ENCODE measurements at regions of chr20 and their contacts with region 1.

Region 1: GRCh38 chr20:45752746-45753145 is 30.6 kb downstream of the SPINT4 start:
- DNase-seq: peak; percentile 53
- H3K4me3 Mint-ChIP-seq: no peak overlapping the region
- H3K27ac Mint-ChIP-seq: no peak overlapping the region
- H3K4me1 Mint-ChIP-seq: peaks cover 26% of the 10 kb centered on the region
- H3K27me3 Mint-ChIP-seq: peaks cover 16% of the 10 kb centered on the region

Region 2: GRCh38 chr20:45347936-45348778 is 404.6 kb before region 1 on chr20 and contains the start of gene SDC4:
- CTCF ChIA-PET with region 1: no interaction called
- intact Hi-C with region 1: loop called (anchors 1 kb)
- DNase-seq: peak; percentile 68
- H3K4me3 Mint-ChIP-seq: peak within 1 kb of the TSS; percentile 80
- H3K27ac Mint-ChIP-seq: peak within 1 kb of the TSS; percentile 77
- H3K4me1 Mint-ChIP-seq: peaks cover 38% of the 10 kb centered on the region
- H3K27me3 Mint-ChIP-seq: no peaks in the 10 kb centered on the region
- total RNA-seq, gene SDC4: 28.4 to 31.4 TPM

Region 3: GRCh38 chr20:45611054-45611453 is 141.7 kb before region 1 on chr20:
- CTCF ChIA-PET with region 1: no interaction called
- intact Hi-C with region 1: loop called (anchors 1 kb)
- DNase-seq: peak; percentile 62
- H3K4me3 Mint-ChIP-seq: no peak overlapping the region
- H3K27ac Mint-ChIP-seq: no peak overlapping the region
- H3K4me1 Mint-ChIP-seq: peaks cover 15% of the 10 kb centered on the region
- H3K27me3 Mint-ChIP-seq: peaks cover 10% of the 10 kb centered on the region

Region 4: DNA sequence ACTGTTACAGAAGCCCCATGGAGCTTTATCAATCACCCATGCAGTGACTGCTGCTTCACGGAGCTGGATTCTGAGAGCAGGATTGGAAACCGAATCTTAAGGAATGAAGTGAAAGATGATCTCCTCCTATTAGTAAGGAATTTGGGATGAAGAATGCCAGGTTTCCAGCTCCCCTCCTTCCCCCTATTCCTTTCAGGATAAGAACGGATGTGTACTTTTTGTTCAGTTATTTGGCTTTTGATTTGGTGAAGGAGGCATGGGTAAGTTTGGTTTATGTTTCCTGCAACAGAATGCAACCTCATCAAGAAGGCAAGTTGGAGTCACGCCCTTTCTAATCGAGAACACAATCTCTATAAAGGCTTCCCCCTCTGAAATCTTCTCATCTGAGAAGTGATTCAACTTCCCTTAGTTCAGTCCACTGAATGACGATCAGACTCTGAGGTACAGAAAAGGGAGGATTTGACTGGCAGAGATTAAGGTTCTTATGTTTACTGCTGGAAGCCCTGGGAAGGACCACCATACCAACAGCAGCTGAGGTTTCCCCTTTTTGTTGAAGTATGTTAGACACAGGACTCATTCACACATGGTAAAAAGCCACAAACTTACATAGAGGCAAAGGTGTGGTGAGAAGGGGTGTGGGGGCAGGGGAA is 648.2 kb after region 1 on chr20:
- CTCF ChIA-PET with region 1: no interaction called
- intact Hi-C with region 1: loop called (anchors 5 kb)
- DNase-seq: peak; percentile 63
- H3K4me3 Mint-ChIP-seq: peak overlapping the region; percentile 59
- H3K27ac Mint-ChIP-seq: peak overlapping the region; percentile 91
- H3K4me1 Mint-ChIP-seq: peaks cover 60% of the 10 kb centered on the region
- H3K27me3 Mint-ChIP-seq: no peaks in the 10 kb centered on the region